Activated CD4-positive, alpha-beta T cell treated with anti-CD3 and anti-CD28 coated beads, Interleukin-2, amount 10 ng/mL, durations not matched to agents 24 days and 14 days (primary cell): ENCODE measurements at regions of chr2 and their contacts with region 1.

Region 1: DNA sequence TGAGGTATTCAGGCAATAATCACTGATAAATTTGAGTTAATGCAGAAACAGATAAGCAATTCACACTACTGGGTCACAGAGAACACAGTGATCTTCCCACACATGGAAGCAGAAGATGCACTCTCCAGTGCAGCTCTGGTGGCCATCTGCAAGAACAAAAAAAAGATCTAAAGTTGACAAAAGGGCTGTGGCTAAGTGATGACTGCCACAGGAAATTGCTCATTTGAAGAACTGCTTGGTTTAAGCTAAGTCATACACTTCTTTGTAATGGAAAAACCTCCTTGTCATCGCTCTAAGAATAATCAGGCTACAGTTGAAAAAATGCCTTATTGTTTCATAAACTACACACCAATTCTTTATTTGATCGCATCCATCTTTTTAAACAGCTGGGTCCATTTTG is 115.1 kb downstream of the DTNB start:
- DNase-seq: peak; percentile 88
- H3K4me3 Mint-ChIP-seq: peak overlapping the region; percentile 39
- H3K27ac Mint-ChIP-seq: peak overlapping the region; percentile 96
- H3K4me1 Mint-ChIP-seq: peaks cover 60% of the 10 kb centered on the region
- H3K27me3 Mint-ChIP-seq: no peaks in the 10 kb centered on the region

Region 2: DNA sequence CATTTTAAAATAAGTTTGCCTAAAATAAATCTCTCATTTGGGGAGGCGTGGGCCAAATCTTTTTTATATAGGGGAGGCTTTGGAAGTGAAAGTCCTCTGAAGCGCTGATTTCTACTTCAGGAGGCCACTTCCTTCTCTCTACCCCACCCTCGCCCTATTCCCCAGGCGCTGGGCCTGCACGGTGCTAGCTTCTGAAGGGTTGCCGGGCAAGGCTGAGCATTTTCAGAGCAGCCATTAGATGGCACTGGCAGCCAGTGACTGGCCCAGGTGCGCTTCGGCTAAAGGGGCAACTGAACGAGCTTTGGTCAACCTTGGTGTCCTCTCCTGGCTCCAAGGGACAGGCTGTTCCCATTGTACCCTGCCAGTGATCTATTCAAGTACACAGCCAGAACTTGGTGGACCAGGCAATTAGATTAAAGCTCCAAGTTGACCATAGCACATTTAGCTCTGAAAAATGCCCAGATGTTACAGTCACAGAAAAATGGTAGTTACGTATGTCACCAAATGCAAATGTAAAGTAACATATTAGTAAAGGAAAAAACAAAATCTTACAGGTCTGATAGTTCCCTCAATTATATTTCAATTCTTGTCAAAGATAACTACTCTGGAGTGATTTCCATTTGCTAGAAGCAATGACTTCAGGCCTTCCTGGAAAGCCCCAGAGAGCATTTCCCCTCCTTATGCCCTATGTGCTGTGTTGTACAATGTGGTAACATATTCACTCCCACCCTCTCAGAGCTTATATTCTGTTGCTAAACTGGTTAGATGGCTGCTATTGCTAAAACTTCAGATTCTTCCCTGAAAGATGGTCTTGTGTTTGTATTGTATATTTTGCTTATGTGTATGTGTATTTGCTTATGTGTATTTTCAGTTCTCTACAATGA is 392.0 kb before region 1 on chr2:
- intact Hi-C with region 1: loop called (anchors 5 kb)
- DNase-seq: peak; percentile 82
- H3K4me3 Mint-ChIP-seq: no peak overlapping the region
- H3K27ac Mint-ChIP-seq: no peak overlapping the region
- H3K4me1 Mint-ChIP-seq: peaks cover 17% of the 10 kb centered on the region
- H3K27me3 Mint-ChIP-seq: peaks cover 48% of the 10 kb centered on the region

Region 3: GRCh38 chr2:25314514-25315315 is 243.5 kb before region 1 on chr2:
- intact Hi-C with region 1: loop called (anchors 1 kb)
- DNase-seq: peak; percentile 94
- H3K4me3 Mint-ChIP-seq: peak overlapping the region; percentile 91
- H3K27ac Mint-ChIP-seq: peak overlapping the region; percentile 97
- H3K4me1 Mint-ChIP-seq: peaks cover 44% of the 10 kb centered on the region
- H3K27me3 Mint-ChIP-seq: no peaks in the 10 kb centered on the region

Region 4: DNA sequence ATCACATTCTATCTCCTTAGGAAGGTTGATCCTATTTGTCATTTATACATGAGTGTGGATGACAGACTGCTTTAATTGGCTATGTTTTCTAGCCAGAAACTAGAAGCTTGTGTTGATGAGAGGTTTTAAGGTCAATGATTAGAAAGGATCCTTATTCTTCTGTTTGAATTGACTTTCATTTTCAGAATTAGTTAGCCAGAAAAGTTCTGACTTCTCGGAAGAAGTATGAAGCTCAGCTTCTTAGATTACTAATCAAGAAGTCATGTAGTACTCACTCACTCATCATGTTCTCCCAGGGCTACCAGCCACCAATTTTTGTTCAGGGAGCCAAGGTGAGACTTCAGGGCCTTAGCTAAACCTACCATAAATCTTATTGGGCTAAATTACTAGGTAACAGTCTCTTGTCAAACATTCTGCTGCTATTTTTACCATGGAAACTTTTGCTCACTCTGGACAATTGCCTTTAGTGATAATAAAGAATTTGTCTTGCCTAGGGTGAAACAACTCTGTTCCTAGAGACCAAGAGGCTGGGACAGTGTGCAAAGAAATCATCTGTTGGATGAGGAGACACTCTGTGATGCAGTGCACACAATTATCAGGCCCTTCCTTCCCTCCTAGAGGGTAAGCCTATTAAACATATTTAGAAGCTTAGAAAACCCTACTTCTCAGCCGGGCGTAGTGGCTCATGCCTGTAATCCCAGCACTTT is 104.9 kb before region 1 on chr2:
- intact Hi-C with region 1: loop called (anchors 1 kb)
- DNase-seq: peak; percentile 82
- H3K4me3 Mint-ChIP-seq: peak overlapping the region; percentile 57
- H3K27ac Mint-ChIP-seq: peak overlapping the region; percentile 91
- H3K4me1 Mint-ChIP-seq: peaks cover 21% of the 10 kb centered on the region
- H3K27me3 Mint-ChIP-seq: no peaks in the 10 kb centered on the region

Region 5: DNA sequence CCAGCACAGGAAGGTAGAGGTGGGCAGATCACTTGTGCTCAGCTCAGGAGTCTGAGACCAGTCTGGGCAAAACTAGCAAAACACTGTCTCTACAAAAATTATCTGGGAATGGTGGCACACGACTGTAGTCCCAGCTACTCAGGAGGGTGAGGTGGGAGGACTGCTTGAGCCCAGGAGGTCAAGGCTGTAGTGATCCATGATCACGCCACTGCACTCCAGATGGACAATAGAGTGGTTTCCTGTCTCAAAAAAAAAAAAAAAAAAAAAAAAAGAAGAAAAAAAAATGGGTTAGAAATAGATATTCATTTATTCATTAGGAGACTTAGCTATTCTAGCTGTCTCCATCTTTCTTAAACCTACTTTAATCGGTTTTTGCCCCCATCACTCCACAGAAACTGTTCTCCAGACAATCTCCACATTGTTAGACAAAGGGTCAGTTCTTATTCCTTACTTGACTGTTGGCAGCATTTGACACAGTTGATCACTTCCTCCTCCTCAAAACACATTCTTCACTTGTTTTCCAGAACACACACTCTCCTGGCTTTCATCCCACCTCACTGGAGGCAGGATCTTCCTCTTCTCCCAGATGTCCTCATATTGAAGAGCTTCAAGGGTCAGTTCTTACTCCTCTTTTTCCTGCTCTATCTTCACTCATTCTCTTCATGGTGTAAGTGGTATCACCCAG is 12.0 kb after region 1 on chr2:
- intact Hi-C with region 1: no loop called
- DNase-seq: peak; percentile 44
- H3K4me3 Mint-ChIP-seq: no peak overlapping the region
- H3K27ac Mint-ChIP-seq: no peak overlapping the region
- H3K4me1 Mint-ChIP-seq: peaks cover 10% of the 10 kb centered on the region
- H3K27me3 Mint-ChIP-seq: no peaks in the 10 kb centered on the region

Region 6: DNA sequence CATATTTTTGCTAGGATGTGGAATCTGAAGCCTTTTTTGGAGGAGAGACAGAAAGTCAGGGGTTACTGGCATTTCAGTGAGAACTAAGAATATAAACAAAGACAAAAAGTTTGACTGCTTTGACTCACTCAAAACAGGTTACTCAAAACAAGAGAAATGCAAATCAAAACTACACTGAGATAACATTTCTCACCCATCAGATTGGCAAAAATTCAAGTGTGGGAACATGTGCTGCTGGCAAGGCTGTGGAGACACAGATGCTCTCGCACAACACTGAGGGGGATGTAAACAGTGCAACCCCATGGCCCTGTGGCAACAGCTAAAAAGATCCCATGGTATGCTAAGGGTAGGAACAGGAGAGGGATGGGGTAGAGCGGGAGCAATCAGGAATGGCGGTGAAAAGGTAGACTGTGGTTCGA is 28.5 kb after region 1 on chr2:
- intact Hi-C with region 1: loop called (anchors 1 kb)
- DNase-seq: peak; percentile 74
- H3K4me3 Mint-ChIP-seq: peak overlapping the region; percentile 36
- H3K27ac Mint-ChIP-seq: peak overlapping the region; percentile 87
- H3K4me1 Mint-ChIP-seq: peaks cover 22% of the 10 kb centered on the region
- H3K27me3 Mint-ChIP-seq: no peaks in the 10 kb centered on the region